Activated CD4-positive, alpha-beta T cell treated with anti-CD3 and anti-CD28 coated beads, Interleukin-2, amount 10 ng/mL, durations not matched to agents 24 days and 14 days (primary cell): ENCODE measurements at regions of chr10 and their contacts with region 1.

Region 1: DNA sequence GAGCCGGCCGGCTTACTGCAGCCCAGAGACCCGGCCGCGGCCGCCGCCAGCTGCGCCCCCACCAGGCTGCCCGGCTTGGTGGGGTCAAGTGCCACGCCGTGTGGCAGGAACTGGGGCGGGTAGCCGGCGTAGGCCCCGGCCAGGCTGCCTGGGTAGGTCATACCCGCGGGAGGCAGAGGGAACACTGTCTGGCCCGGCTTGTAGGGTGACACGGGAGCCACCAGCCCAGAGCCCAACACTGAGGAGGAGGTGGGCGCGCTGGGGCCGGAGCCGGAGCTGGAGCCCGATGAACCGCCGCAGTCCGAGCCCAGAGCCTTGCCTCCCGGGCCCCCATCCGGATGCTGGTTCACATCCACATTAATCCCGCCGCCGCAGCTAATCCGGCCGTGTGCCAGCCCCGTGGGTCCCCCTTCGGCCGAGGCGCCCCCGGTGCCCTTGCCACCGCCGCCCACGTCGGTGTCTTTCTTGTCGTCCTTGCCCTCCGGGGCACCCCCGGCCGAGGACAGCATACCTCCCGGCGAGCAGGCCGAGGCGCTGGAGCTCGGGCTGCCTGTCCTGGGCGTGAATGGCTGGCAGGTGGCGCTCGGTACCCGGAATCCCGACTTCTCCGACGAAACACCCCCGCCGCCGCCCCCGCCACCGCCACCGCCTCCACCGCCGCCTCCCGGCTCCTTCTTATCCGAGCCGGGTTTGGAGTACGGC is 2.0 kb downstream of the ZNF503 start:
- DNase-seq: peak; percentile 82
- H3K4me3 Mint-ChIP-seq: peak overlapping the region; percentile 79
- H3K27ac Mint-ChIP-seq: no peak overlapping the region
- H3K4me1 Mint-ChIP-seq: peaks cover 27% of the 10 kb centered on the region
- H3K27me3 Mint-ChIP-seq: peaks cover 58% of the 10 kb centered on the region

Region 2: GRCh38 chr10:74255888-74256357 is 1143.7 kb before region 1 on chr10:
- intact Hi-C with region 1: no loop called
- DNase-seq: no peak
- H3K4me3 Mint-ChIP-seq: no peak overlapping the region
- H3K27ac Mint-ChIP-seq: no peak overlapping the region
- H3K4me1 Mint-ChIP-seq: peaks cover 4% of the 10 kb centered on the region
- H3K27me3 Mint-ChIP-seq: no peaks in the 10 kb centered on the region

Region 3: GRCh38 chr10:75431180-75432111 is 31.8 kb after region 1 on chr10 and contains the start of gene LRMDA:
- intact Hi-C with region 1: no loop called
- DNase-seq: no peak
- H3K4me3 Mint-ChIP-seq: no peak within 1 kb of the TSS
- H3K27ac Mint-ChIP-seq: no peak within 1 kb of the TSS
- H3K4me1 Mint-ChIP-seq: no peaks in the 10 kb centered on the region
- H3K27me3 Mint-ChIP-seq: peaks cover 43% of the 10 kb centered on the region
- total RNA-seq, gene LRMDA: not detected in 2 replicates

Region 4: DNA sequence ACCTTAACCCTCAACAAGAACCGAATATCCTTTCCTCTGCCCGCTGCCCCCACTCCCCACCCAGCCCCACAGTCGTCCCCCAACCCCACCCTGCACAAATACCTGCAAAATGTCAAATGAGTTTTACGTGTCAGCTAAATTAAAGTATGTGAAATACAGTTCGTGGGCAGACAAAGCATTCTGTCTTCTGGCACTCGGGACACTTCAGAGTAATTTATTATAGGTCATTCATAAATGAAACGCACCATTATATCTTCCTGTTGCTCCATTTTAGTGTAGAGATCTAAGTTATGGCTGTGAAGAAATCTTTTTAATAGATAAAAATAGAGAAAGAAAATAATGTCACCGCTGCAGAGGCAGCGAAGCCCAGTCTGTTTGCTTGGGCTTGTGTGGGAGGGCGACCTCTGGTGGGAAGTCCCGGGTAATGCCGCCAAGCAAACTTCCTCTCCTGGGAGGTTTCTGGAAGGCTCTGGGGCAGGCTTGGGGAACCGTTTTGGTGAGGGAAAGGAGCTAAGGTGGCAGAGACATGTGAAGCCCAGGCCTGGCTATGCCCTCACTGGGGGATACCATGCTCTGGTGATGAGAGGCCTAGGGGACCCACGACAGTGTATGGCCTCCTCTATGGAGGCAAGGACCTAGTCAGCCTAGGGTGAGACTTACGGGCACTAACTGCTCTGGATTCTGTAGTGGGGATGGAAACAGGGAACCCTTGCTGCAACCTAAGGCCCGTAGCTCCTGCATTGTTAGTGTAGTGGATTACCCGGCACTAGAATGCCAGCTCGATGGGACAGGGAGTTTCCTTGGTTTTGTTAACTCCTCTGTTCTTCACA is 636.7 kb after region 1 on chr10:
- intact Hi-C with region 1: loop called (anchors 5 kb)
- DNase-seq: peak; percentile 81
- H3K4me3 Mint-ChIP-seq: no peak overlapping the region
- H3K27ac Mint-ChIP-seq: no peak overlapping the region
- H3K4me1 Mint-ChIP-seq: no peaks in the 10 kb centered on the region
- H3K27me3 Mint-ChIP-seq: no peaks in the 10 kb centered on the region